ENCODE measurements at regions of chr17 and their contacts with region 1.

Region 1: DNA sequence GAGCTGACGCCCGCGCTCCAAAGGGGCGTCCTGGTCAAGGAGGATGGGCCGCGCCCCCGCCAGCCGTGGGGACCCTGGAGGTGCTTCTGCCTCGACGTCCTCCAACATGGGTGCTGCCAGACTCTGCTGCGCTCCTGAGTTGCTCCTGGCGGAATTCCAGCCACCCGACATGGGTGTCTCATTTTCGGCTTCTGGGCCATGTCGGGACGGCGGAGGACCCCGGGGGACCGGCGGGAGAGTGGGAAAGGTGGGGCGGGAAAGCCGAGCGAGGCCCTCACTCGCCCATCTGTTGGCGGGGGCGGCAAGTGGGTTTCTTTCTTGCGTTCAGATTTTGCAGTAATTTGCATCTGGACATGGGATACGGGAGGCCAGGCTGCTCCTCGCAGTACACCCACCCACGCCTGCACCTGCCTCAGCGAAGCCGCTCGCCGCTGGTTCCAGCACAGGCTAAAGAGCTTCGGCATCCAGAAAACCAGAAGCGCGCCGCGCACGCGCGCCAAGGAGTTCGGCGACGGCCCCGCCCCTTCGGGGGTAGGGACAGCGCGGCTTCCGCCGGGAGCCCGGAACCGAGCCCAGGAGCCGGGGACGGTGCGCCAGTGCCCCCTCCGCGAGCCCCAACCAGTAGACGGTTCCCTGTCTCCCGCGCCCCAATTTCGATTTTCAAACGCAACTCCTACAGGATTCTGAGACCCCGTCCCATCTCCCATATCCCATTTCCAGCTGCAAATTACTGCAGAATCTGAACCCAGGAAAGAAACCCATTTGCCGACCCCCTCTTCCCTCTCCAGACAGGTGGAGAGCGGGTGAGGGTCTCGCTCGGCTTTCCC is at the start of gene ARMC7:
- DNase-seq: peak; percentile 79 to 82 (median 81)
- H3K4me3 ChIP-seq: peak within 1 kb of the TSS; percentile 51 to 95 (median 86)
- H3K27ac ChIP-seq: peak within 1 kb of the TSS in 1 of 2 experiments; percentile 74
- H3K4me1 ChIP-seq: peaks cover 0 to 41% (median 35%) of the 10 kb centered on the region in 4 experiments
- H3K27me3 ChIP-seq: no peaks in the 10 kb centered on the region

Region 2: GRCh38 chr17:75069783-75070182 is 39.8 kb before region 1 on chr17:
- CTCF ChIA-PET with region 1: interaction called, 43 read pairs
- POLR2A ChIA-PET with region 1: no interaction called
- DNase-seq: peak; percentile 34 to 56 (median 51)
- H3K4me3 ChIP-seq: no peak overlapping the region
- H3K27ac ChIP-seq: no peak overlapping the region
- H3K4me1 ChIP-seq: peaks cover 0 to 21% (median 18%) of the 10 kb centered on the region in 4 experiments
- H3K27me3 ChIP-seq: no peaks in the 10 kb centered on the region

Region 3: DNA sequence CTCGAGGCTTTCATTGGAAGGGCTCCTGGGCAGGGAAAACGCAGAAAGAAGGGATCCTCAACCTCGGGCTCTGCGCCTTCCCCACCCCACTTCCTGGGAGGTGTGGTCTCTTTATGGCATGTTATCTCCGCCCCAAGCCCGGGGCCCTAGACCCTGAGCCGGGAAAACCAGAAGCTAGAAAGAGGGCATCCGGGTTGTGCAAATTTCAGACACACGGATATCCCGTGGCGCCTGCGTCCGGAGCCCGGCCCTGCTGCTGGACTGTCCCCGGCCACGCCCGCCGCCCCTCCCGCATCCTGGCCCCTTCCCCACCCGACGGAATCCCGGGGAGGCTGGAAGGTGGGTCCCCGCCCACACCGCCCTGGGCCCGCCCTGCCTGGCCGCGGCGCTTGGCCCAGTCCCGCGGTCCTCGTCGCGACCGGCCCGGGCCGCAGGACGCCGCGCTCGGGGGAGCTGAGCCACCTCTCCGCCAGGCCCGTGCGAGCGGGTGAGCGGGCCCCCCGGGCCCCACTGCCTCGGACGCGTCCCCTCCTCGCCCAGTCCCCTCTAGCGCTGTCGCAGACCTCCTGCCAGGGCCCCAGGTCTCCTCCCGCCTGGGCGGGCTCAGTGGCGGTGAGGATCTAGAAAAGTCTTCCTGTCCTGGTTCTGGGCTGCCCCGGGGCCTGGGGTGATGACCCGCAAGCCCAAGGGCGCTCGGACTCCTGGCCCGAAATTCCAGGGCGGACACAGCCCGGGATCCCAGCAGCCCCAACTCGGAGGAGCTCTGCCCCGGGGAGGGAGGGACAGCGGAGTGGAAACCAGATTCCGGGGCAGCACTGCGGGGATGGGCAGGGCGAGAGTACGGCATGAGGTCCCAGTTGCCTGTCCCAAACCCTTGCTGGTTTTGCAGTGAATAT is 21.8 kb before region 1 on chr17 and contains the start of gene SLC16A5:
- CTCF ChIA-PET with region 1: interaction called, 29 read pairs
- POLR2A ChIA-PET with region 1: interaction called, 5 read pairs
- DNase-seq: peak in 2 of 3 donors; percentile 42 to 52
- H3K4me3 ChIP-seq: peak within 1 kb of the TSS; percentile 7 to 87 (median 75)
- H3K27ac ChIP-seq: peak within 1 kb of the TSS in 1 of 2 experiments; percentile 67
- H3K4me1 ChIP-seq: peaks cover 0 to 54% (median 29%) of the 10 kb centered on the region in 4 experiments
- H3K27me3 ChIP-seq: no peaks in the 10 kb centered on the region

Region 4: GRCh38 chr17:75124041-75124818 is 14.6 kb after region 1 on chr17:
- CTCF ChIA-PET with region 1: interaction called, 168 read pairs
- POLR2A ChIA-PET with region 1: interaction called, 13 read pairs
- DNase-seq: peak; percentile 94 to 97 (median 96)
- H3K4me3 ChIP-seq: peak overlapping the region in 2 of 7 experiments; percentile 28 to 49
- H3K27ac ChIP-seq: peak overlapping the region; percentile 64 to 85
- H3K4me1 ChIP-seq: peaks cover 5 to 34% (median 29%) of the 10 kb centered on the region in 4 experiments
- H3K27me3 ChIP-seq: no peaks in the 10 kb centered on the region

Region 5: GRCh38 chr17:75147878-75148546 is 38.4 kb after region 1 on chr17:
- CTCF ChIA-PET with region 1: interaction called, 13 read pairs
- POLR2A ChIA-PET with region 1: interaction called, 3 read pairs
- DNase-seq: no peak
- H3K4me3 ChIP-seq: no peak overlapping the region
- H3K27ac ChIP-seq: no peak overlapping the region
- H3K4me1 ChIP-seq: peaks cover 0 to 10% (median 6%) of the 10 kb centered on the region in 4 experiments
- H3K27me3 ChIP-seq: no peaks in the 10 kb centered on the region

Region 6: GRCh38 chr17:75205037-75205792 is 95.6 kb after region 1 on chr17 and contains the start of gene NUP85:
- CTCF ChIA-PET with region 1: interaction called, 89 read pairs
- POLR2A ChIA-PET with region 1: no interaction called
- DNase-seq: peak; percentile 90
- H3K4me3 ChIP-seq: peak within 1 kb of the TSS; percentile 85 to 99 (median 96)
- H3K27ac ChIP-seq: peak within 1 kb of the TSS; percentile 97 to 99
- H3K4me1 ChIP-seq: peaks cover 6 to 17% (median 17%) of the 10 kb centered on the region in 4 experiments
- H3K27me3 ChIP-seq: no peaks in the 10 kb centered on the region

Measured in common myeloid progenitor, CD34-positive (primary cell).